ENCODE measurements at regions of chr2 and their contacts with region 1.

Region 1: GRCh38 chr2:196798980-196799379 is 503 bp downstream of the GTF3C3 start:
- DNase-seq: no peak
- ATAC-seq: peak; percentile 5
- H3K4me3 Mint-ChIP-seq: peak overlapping the region; percentile 85
- H3K27ac Mint-ChIP-seq: peak overlapping the region; percentile 97
- H3K4me1 Mint-ChIP-seq: peaks cover 38% of the 10 kb centered on the region
- H3K27me3 Mint-ChIP-seq: peaks cover 2% of the 10 kb centered on the region

Region 2: DNA sequence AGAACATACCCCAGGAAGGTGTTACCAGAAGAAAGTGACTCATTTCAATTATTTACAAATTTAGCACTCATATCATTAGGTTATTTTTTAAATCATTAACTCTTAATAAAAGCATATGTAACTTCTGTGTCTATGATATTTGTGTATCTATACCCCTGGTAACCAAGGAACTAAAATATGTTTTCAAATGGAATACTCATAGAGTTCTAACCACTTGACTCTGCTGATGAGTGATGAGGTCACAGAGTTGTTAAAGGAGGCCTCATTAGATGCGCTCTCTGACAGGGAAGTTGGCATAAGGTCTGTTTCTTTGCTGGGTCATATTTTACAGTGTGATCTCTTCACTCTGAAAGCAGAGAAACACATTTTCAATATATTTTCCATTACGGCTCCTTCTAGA is 86.1 kb before region 1 on chr2:
- CTCF ChIA-PET with region 1: no interaction called
- POLR2A ChIA-PET with region 1: no interaction called
- intact Hi-C with region 1: no loop called
- DNase-seq: no peak
- ATAC-seq: no peak
- H3K4me3 Mint-ChIP-seq: no peak overlapping the region
- H3K27ac Mint-ChIP-seq: no peak overlapping the region
- H3K4me1 Mint-ChIP-seq: no peaks in the 10 kb centered on the region
- H3K27me3 Mint-ChIP-seq: peaks cover 4% of the 10 kb centered on the region

Region 3: DNA sequence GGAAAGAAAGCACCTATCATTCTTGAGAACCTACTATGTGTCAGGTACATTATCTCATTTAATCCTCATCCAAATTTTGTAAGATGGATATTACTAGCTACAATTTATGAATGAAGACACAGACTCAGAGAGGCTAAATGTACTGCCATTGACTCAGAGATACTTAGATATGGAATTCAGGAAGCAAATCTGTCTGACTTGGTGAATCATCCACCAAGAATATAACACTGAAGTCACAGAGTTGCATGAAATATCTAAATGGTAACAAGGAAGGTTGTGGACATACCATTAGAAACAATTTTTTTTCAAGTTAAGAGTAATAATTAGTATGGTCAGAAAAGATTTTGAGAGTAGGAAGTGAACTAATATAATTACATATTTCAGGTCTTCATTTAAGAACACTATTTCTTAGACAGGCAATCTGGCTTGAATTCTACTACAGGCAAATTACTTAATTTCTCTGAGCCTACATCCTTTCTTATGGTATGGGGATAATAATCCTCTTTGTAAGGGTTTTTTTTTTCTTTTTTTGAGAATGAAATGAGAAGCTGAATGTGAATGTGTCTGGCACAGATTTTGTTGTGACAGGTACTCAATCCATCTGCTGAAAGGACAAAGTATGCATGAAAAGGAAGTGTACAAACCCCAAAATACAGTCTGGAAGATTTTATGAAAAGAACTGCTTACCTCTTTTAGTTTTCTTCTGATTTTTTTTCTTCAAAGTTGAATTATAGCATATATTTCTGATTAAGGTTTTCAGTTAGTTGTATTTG is 25.0 kb after region 1 on chr2:
- CTCF ChIA-PET with region 1: no interaction called
- POLR2A ChIA-PET with region 1: no interaction called
- intact Hi-C with region 1: loop called in 1 of 2 experiments (anchors 2 kb)
- DNase-seq: no peak
- ATAC-seq: no peak
- H3K4me3 Mint-ChIP-seq: no peak overlapping the region
- H3K27ac Mint-ChIP-seq: no peak overlapping the region
- H3K4me1 Mint-ChIP-seq: peaks cover 3% of the 10 kb centered on the region
- H3K27me3 Mint-ChIP-seq: peaks cover 14% of the 10 kb centered on the region

Region 4: GRCh38 chr2:196987649-196988364 is 188.8 kb after region 1 on chr2:
- CTCF ChIA-PET with region 1: no interaction called
- POLR2A ChIA-PET with region 1: interaction called, 3 read pairs
- intact Hi-C with region 1: loop called in 1 of 2 experiments (anchors 2 kb)
- DNase-seq: peak; percentile 62
- ATAC-seq: peak; percentile 93
- H3K4me3 Mint-ChIP-seq: peak overlapping the region; percentile 38
- H3K27ac Mint-ChIP-seq: peak overlapping the region; percentile 98
- H3K4me1 Mint-ChIP-seq: peaks cover 65% of the 10 kb centered on the region
- H3K27me3 Mint-ChIP-seq: no peaks in the 10 kb centered on the region

Region 5: DNA sequence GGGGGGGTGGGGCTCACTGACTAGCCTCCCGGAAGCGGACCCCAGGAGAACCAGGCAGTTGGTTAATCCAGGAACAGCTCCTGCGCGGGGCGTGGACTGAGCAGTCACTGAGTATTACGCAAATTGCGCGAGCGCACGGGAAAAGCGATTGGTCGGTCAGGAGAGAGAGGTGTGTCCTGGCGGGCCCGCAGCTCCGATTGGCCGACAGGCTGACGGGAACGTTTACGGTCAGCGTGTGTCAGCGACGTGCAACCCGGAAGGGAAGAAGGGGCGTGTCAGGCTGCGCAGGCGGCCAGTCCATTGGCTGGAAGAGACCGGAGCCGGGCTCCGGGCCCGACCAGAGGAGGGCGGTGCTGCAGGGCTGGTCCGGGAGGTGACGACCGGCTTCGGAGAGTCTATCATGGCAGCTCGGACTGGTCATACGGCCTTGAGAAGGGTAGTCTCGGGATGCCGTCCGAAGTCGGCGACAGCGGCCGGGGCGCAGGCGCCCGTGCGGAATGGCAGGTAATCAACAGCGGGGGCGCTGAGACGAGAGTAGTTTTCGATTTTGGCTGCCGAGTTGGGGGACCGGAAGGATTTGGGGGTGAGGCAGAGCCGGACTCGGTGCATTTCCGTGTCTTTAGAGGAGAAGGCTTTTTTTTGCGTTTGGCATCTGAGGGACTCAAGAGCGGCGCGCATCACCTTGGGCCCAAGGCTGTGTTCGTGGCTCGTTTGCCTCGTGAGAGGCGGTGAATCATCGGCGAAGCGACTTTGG is 654.4 kb after region 1 on chr2 and contains the start of gene COQ10B:
- CTCF ChIA-PET with region 1: no interaction called
- POLR2A ChIA-PET with region 1: interaction called, 3 read pairs
- intact Hi-C with region 1: loop called in 1 of 2 experiments (anchors 1 kb)
- DNase-seq: peak; percentile 99
- ATAC-seq: peak; percentile 93
- H3K4me3 Mint-ChIP-seq: peak within 1 kb of the TSS; percentile 90
- H3K27ac Mint-ChIP-seq: peak within 1 kb of the TSS; percentile 96
- H3K4me1 Mint-ChIP-seq: peaks cover 42% of the 10 kb centered on the region
- H3K27me3 Mint-ChIP-seq: no peaks in the 10 kb centered on the region
- total RNA-seq, gene COQ10B: 9.7 to 13.3 TPM

Measured in activated CD4-positive, alpha-beta T cell treated with anti-CD3 and anti-CD28 coated beads for 36 hours (primary cell).